Dendritic cell treated with granulocyte-macrophage colony-stimulating factor and Interleukin-4, amounts not matched to agents 40 ng/mL and 50 ng/mL, for 4 days (primary cell): ENCODE measurements at regions of chr9 and their contacts with region 1.

Region 1: DNA sequence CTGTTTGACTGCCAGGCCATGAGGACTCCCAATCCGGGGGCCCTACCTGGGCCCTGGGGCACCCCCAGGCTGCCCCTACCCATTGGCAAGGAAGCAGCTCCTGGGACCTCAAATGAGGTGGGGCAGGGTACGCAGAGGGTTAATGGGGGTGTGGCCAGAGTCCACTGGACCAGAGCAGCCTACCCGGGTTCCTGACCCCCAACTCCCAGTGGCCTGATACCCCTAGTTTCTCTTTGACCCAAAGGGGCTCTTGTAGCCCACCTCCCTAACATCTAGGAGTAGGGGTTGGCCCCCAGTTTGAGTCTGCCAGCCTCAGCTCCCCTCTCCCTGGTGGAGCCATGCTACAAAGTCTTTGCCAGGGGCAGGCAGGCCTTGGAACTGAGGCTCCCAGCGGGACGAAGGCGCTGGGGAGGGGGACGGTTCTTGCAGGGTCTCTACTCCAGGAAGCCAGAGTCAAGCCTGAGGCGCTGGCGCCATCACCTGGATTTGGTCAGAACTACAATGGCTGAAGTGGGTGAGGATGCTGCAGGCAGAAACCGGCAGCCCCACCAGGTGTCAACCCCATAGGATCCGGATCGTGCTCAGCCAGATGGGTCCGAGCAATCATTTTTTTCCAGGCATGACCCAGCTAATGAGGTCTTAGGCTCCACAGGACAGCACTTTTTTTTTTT is 8.4 kb upstream of the CERCAM start:
- H3K4me3 Mint-ChIP-seq: no peak overlapping the region
- H3K27ac Mint-ChIP-seq: no peak overlapping the region
- H3K4me1 Mint-ChIP-seq: peaks cover 5% of the 10 kb centered on the region
- H3K27me3 Mint-ChIP-seq: peaks cover 66% of the 10 kb centered on the region

Region 2: GRCh38 chr9:128296337-128297220 is 115.7 kb before region 1 on chr9:
- intact Hi-C with region 1: loop called (anchors 5 kb)
- H3K4me3 Mint-ChIP-seq: no peak overlapping the region
- H3K27ac Mint-ChIP-seq: no peak overlapping the region
- H3K4me1 Mint-ChIP-seq: no peaks in the 10 kb centered on the region
- H3K27me3 Mint-ChIP-seq: no peaks in the 10 kb centered on the region

Region 3: GRCh38 chr9:128361986-128362646 is 50.1 kb before region 1 on chr9:
- intact Hi-C with region 1: loop called (anchors 1 kb)
- H3K4me3 Mint-ChIP-seq: peak overlapping the region; percentile 100
- H3K27ac Mint-ChIP-seq: peak overlapping the region; percentile 94
- H3K4me1 Mint-ChIP-seq: peaks cover 22% of the 10 kb centered on the region
- H3K27me3 Mint-ChIP-seq: no peaks in the 10 kb centered on the region